ENCODE measurements at regions of chr6 and their contacts with region 1.

Region 1: DNA sequence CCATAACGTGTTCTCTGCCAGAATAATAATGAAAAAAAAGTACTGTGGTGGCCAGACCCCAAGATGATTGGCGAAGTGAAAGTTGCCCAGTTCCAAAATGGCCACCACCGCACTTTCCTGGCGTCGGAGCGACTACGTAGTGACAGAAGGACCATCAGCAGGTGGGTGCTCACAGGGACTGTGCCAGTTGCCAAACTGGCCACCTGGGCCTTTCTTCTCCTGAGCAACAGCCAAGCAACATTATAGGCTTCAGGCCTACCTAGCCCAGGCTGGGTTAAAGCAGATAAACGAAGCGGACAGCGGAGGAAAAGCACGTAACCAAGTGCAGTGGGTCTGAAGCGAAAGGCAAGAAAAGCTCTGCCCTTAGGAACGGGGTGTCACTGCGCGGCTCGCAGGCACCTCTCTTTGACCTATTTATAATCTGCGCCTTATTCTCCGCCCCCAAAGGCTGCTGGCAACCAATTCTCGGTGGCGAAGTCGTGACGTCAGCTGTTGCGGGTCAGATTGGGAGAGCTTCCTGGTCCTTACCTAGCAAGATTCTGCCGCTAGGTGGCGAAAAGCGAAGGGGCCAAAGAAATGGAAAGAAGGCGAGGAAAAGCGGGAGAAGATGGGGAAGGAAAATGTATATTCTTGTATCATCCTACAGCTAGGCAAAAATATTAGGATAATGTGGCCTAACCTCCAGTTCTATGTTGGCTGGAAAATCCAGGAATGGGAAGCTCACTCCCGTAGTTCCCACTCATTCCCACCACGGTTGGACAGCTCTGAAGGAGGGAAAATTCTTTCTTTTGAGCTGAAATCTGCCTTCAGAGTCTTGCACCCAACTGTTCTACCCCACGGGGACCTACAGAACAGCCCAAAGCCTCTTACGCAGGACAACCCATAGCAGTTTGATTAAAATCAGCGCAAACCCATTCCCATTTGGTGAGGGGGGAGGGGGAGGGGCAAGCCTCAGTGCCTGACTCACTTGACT is 6.9 kb upstream of the MOG start:
- DNase-seq: peak; percentile 96
- H3K4me3 ChIP-seq: peak overlapping the region; percentile 57 to 60 (median 59)
- H3K27ac ChIP-seq: peak overlapping the region; percentile 68
- H3K4me1 ChIP-seq: peaks cover 6% of the 10 kb centered on the region
- H3K27me3 ChIP-seq: no peaks in the 10 kb centered on the region
- CTCF ChIP-seq: peak; percentile 93 to 98

Region 2: GRCh38 chr6:29685718-29686326 is 35.8 kb after region 1 on chr6:
- CTCF ChIA-PET with region 1: interaction called, 5 read pairs
- dilution Hi-C with region 1: no loop called
- in situ Hi-C with region 1: no loop called
- intact Hi-C with region 1: loop called (anchors 1 kb)
- DNase-seq: no peak
- H3K4me3 ChIP-seq: no peak overlapping the region
- H3K27ac ChIP-seq: no peak overlapping the region
- H3K4me1 ChIP-seq: no peaks in the 10 kb centered on the region
- H3K27me3 ChIP-seq: no peaks in the 10 kb centered on the region
- CTCF ChIP-seq: no peak

Region 3: DNA sequence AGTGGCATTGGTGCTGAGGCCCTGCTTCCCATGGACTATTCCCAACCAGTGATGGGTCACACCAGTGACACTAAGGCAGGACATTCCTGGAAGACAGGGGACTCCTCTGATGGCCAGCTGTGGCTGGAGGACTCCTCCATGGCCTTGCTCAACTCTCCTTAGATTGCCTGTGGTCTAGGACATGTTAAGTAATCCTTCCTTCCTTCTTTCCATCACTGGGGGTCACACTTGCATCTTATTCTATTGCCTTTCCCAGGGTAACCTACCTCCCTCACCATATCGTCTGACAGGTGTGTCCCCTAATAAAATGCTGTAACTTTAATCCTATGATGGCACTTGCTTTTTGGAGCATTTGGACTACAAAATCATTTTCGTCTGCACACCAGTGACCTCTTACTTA is 267.9 kb after region 1 on chr6:
- CTCF ChIA-PET with region 1: no interaction called
- dilution Hi-C with region 1: no loop called
- in situ Hi-C with region 1: no loop called
- intact Hi-C with region 1: no loop called
- DNase-seq: no peak
- H3K4me3 ChIP-seq: no peak overlapping the region
- H3K27ac ChIP-seq: no peak overlapping the region
- H3K4me1 ChIP-seq: no peaks in the 10 kb centered on the region
- H3K27me3 ChIP-seq: no peaks in the 10 kb centered on the region
- CTCF ChIP-seq: no peak

Region 4: DNA sequence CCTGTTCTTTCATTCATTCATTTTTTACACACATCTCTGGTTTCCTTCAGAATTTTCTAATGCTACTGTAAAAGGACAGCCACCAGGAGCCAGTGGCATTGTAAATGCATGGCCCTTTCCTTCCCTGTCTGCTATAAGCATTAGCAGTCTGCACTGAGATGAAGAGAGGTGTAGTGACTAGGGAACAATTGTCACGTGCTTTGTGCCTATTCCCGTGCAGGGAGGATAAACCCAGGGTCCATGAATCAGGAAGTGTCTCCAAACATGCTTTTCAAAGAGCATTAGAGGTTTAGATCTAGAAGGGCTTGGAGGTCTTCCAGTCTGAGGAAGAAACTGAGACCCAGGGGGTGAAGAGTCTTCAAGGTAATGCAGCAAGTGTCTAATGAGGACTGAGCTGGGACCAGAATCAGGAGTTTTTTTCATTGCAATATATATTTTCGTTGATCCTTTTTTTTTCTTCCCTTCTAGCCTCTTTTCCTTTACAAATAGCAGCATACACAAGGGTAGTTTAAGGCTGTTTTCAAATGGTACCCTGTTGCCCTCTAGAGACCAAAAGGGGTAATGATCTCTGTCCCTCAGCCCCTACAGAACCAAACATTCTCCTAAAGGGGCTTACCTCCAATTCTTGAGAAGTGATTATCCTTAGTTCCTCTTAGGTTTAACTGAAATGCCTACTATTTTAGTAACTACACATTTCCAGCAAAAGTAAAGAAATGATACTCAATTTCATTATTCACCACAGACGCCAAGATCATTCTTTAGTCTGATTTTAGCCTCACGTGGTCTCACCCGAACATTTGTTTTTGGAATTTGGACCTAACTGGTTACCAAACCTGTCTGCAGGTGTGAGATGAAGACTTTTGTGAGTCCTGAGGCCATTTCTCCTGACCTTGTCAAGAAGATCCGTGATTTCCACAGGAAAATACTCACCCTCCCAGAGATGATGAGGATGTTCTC is 519.9 kb after region 1 on chr6:
- CTCF ChIA-PET with region 1: no interaction called
- dilution Hi-C with region 1: loop called (anchors 25 kb)
- in situ Hi-C with region 1: no loop called
- intact Hi-C with region 1: no loop called
- DNase-seq: peak; percentile 41
- H3K4me3 ChIP-seq: no peak overlapping the region
- H3K27ac ChIP-seq: no peak overlapping the region
- H3K4me1 ChIP-seq: no peaks in the 10 kb centered on the region
- H3K27me3 ChIP-seq: peaks cover 14% of the 10 kb centered on the region
- CTCF ChIP-seq: peak; percentile 85 to 90

Measured in mammary epithelial cell (primary cell).